HepG2 (cell line): ENCODE measurements at regions of chr9 and their contacts with region 1.

Region 1: GRCh38 chr9:121765021-121765950 is 113.9 kb downstream of the DAB2IP start:
- DNase-seq: peak; percentile 90
- ATAC-seq: peak; percentile 77
- H3K4me3 ChIP-seq: peak overlapping the region in 1 of 3 experiments; percentile 39; a peak in 1 of 6 replicates
- H3K27ac ChIP-seq: peak overlapping the region; percentile 73
- H3K4me1 ChIP-seq: peaks cover 27% of the 10 kb centered on the region
- H3K27me3 ChIP-seq: no peaks in the 10 kb centered on the region
- CTCF ChIP-seq: no peak; the same call in 1 of the 2 replicates
- EP300 ChIP-seq: peak in 1 of 2 experiments; percentile 92; a peak in 2 of 4 replicates
- POLR2A ChIP-seq: no peak
- RAD21 ChIP-seq: no peak

Region 2: GRCh38 chr9:121750715-121751623 is 14.3 kb before region 1 on chr9:
- CTCF ChIA-PET with region 1: no interaction called
- POLR2A ChIA-PET with region 1: interaction called, 28 read pairs
- in situ Hi-C with region 1: no loop called
- intact Hi-C with region 1: loop called (anchors 1 kb)
- DNase-seq: peak; percentile 93
- ATAC-seq: peak; percentile 95
- H3K4me3 ChIP-seq: peak overlapping the region in 2 of 3 experiments; percentile 23 to 58; a peak in 4 of 6 replicates
- H3K27ac ChIP-seq: peak overlapping the region; percentile 91
- H3K4me1 ChIP-seq: peaks cover 71% of the 10 kb centered on the region
- H3K27me3 ChIP-seq: no peaks in the 10 kb centered on the region
- CTCF ChIP-seq: no peak
- EP300 ChIP-seq: peak; percentile 11 to 74; a peak in 2 of 4 replicates
- POLR2A ChIP-seq: peak in 1 of 2 experiments; percentile 35; a peak in 1 of 4 replicates
- RAD21 ChIP-seq: peak; percentile 12; the same call in 1 of the 2 replicates